Activated CD8-positive, alpha-beta memory T cell treated with anti-CD3 and anti-CD28 coated beads, Interleukin-2, amount 10 ng/mL, durations not matched to agents 7 days and 5 days (primary cell): ENCODE measurements at regions of chr2 and their contacts with region 1.

Region 1: DNA sequence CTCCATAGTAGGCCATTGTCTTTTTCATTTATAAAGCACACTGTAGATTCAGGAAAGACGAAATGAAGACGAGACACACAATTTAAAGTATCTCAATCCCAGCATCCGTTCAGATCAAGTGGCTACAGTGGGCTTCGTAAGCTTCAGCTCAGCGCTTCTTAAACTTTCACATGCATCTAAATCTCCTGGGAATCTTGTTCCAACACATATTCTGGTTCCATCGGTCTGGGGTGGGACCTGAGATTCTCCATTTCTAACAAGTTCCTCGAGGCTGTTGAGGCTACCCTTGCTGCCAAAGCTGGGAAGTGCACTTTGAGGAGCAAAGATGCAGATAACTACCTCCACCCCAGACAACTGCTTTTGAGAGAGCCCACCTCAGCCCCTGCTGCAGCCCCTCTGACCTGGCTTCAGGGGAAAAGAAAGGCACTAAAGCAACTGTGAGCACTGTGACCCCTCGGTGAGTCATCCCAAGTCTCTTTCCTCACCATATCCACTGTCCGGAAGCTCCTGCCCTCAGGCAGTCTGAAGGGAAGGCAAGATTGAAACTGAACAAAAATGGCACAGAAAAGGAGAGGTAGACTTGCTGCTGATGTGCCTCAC is 201.1 kb upstream of the FBXO11 start:
- DNase-seq: no peak
- ATAC-seq: no peak
- H3K4me3 Mint-ChIP-seq: no peak overlapping the region
- H3K27ac Mint-ChIP-seq: no peak overlapping the region
- H3K4me1 Mint-ChIP-seq: peaks cover 24% of the 10 kb centered on the region
- H3K27me3 Mint-ChIP-seq: peaks cover 15% of the 10 kb centered on the region

Region 2: DNA sequence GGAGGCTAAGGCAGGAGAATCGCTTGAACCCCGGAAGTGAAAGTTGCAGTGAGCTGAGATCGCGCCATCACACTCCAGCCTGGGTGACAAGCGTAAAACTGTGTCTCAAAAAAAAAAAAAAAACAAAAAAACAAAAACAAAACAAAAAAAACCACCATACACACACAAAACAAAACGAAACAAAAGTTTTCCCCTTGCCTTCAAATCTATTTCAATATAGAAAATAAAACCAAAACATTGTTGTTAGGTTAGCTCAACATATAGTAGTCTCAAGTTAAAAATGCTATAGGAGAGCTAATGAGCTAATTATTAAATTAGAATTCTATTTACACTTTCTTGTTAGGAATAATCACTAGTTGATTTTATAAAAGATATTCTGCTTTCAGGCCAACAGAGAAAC is 244.5 kb before region 1 on chr2:
- CTCF ChIA-PET with region 1: interaction called, 22 read pairs
- DNase-seq: no peak
- ATAC-seq: no peak
- H3K4me3 Mint-ChIP-seq: no peak overlapping the region
- H3K27ac Mint-ChIP-seq: no peak overlapping the region
- H3K4me1 Mint-ChIP-seq: peaks cover 22% of the 10 kb centered on the region
- H3K27me3 Mint-ChIP-seq: no peaks in the 10 kb centered on the region

Region 3: GRCh38 chr2:48420512-48421197 is 313.2 kb after region 1 on chr2:
- CTCF ChIA-PET with region 1: interaction called, 11 read pairs
- DNase-seq: peak; percentile 95
- ATAC-seq: peak; percentile 88
- H3K4me3 Mint-ChIP-seq: peak overlapping the region; percentile 36
- H3K27ac Mint-ChIP-seq: peak overlapping the region; percentile 81
- H3K4me1 Mint-ChIP-seq: peaks cover 38% of the 10 kb centered on the region
- H3K27me3 Mint-ChIP-seq: peaks cover 6% of the 10 kb centered on the region